Dorsolateral prefrontal cortex (tissue), 120 donors: ENCODE measurements at regions of chr16 and their contacts with region 1.

Region 1: GRCh38 chr16:30534368-30535105 is at the start of gene ZNF747:
- DNase-seq: peak; percentile 91 to 97 (median 94)
- H3K4me3 ChIP-seq: peak within 1 kb of the TSS; percentile 61 to 97 (median 85)
- H3K27ac ChIP-seq: peak within 1 kb of the TSS; percentile 71 to 98 (median 92)
- H3K27me3 ChIP-seq: no peaks in the 10 kb centered on the region
- CTCF ChIP-seq: peak in 39 of 56 donors; percentile 6 to 54 (median 30)
- total RNA-seq, gene ZNF747: 9.2 to 17.9 (median 12.6) TPM

Region 2: GRCh38 chr16:30557957-30558788 is 23.6 kb after region 1 on chr16 and contains the start of gene ZNF764:
- intact Hi-C with region 1: loop called (anchors 1 kb)
- DNase-seq: peak; percentile 97 to 99 (median 98)
- H3K4me3 ChIP-seq: peak within 1 kb of the TSS; percentile 72 to 100 (median 94)
- H3K27ac ChIP-seq: peak within 1 kb of the TSS; percentile 72 to 98 (median 94)
- H3K27me3 ChIP-seq: no peaks in the 10 kb centered on the region
- CTCF ChIP-seq: peak in 44 of 56 donors; percentile 5 to 67 (median 40)
- total RNA-seq, gene ZNF764: 8.2 to 19.0 (median 11.5) TPM